BJ (cell line): ENCODE measurements at regions of chr4 and their contacts with region 1.

Region 1: DNA sequence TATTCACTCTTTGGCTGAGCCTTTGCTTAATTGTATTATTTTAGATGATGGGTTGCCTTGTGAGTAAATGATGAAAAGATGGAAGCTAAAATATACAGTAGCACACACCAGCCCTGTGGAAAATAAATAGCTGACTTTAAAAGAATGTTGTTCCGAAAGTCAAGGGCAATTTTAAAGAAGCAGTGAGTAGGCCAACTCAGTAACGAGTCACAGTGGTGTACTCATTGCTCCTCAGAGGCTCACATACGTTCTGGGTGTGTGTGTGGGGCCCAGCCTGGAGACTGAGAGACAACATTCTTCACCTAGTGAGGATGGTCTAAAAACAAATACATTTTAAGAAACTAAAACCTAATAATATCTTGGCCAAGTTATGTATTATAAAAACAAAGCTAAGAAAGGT is 640.3 kb downstream of the TRIML1 start:
- DNase-seq: no peak
- H3K4me3 ChIP-seq: no peak overlapping the region
- H3K27me3 ChIP-seq: no peaks in the 10 kb centered on the region
- CTCF ChIP-seq: no peak

Region 2: GRCh38 chr4:188903995-188904394 is 124.4 kb after region 1 on chr4:
- CTCF ChIA-PET with region 1: no interaction called
- POLR2A ChIA-PET with region 1: interaction called, 21 read pairs
- DNase-seq: no peak
- H3K4me3 ChIP-seq: no peak overlapping the region
- H3K27me3 ChIP-seq: no peaks in the 10 kb centered on the region
- CTCF ChIP-seq: no peak